CD14-positive monocyte (primary cell): ENCODE measurements at regions of chr16 and their contacts with region 1.

Region 1: DNA sequence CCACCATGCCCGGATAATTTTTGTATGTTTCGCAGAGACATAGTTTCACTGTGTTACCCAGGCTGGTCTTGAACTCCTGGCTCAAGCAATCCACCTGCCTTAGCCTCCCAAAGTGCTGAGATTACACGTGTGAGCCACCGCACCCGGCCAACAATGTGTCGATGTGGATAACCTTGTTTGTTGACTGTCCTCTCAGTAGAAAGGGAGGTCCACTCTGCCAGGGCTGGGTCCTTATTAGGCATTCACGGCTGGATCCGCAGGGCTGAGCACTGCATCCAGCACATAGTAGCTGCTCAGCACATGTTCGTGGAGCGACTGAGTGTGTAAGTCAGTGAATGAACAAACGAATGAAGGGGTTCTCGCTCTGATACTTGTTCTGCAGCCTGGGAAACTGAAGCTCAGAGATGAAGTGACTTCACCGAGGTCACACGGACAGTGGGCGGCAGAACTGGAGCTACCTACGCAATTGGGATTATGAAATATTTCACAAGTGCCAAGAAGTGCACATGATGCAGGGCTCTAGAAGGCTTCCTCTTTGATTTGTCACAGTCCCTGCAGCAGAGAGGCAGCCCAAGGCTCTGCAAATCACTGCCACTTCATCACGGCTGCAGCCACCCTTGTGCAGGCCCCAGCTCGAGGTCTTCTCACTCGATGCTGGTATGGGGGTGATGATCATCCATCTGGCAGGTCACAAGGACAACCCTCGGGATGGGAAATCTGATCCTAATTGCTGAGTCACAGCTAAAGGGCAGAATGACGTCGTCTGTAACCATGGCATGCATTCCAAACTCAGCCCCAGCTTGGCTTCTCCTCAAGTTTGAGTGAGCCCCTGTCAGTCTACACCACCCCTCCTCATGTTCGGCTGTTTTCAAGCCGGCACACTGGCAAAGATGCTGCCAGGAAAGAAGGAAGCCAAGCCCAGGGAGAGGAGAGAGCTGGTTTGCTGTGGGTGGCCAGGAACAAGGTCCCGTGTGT is 28.0 kb upstream of the SNN start:
- DNase-seq: peak; percentile 99
- H3K4me3 ChIP-seq: peak overlapping the region in 1 of 3 experiments; percentile 6
- H3K4me3 Mint-ChIP-seq: peak overlapping the region; percentile 56 to 71
- H3K27ac ChIP-seq: peak overlapping the region; percentile 96 to 97
- H3K27ac Mint-ChIP-seq: peak overlapping the region; percentile 99 to 100 (median 100)
- H3K4me1 ChIP-seq: peaks cover 26 to 30% of the 10 kb centered on the region in 2 donors
- H3K4me1 Mint-ChIP-seq: peaks cover 41% of the 10 kb centered on the region
- H3K27me3 ChIP-seq: no peaks in the 10 kb centered on the region
- H3K27me3 Mint-ChIP-seq: peaks cover 6 to 14% (median 14%) of the 10 kb centered on the region in 3 donors
- CTCF ChIP-seq: no peak

Region 2: GRCh38 chr16:11407047-11407982 is 232.9 kb before region 1 on chr16:
- intact Hi-C with region 1: loop called (anchors 5 kb)
- DNase-seq: peak; percentile 63 to 72 (median 65)
- H3K4me3 ChIP-seq: no peak overlapping the region
- H3K4me3 Mint-ChIP-seq: no peak overlapping the region
- H3K27ac ChIP-seq: no peak overlapping the region
- H3K27ac Mint-ChIP-seq: peak overlapping the region in 1 of 7 donors; percentile 18
- H3K4me1 ChIP-seq: peaks cover 17 to 23% of the 10 kb centered on the region in 2 donors
- H3K4me1 Mint-ChIP-seq: peaks cover 19% of the 10 kb centered on the region
- H3K27me3 ChIP-seq: no peaks in the 10 kb centered on the region
- H3K27me3 Mint-ChIP-seq: peaks cover 1 to 7% (median 5%) of the 10 kb centered on the region in 3 donors
- CTCF ChIP-seq: peak; percentile 85

Region 3: DNA sequence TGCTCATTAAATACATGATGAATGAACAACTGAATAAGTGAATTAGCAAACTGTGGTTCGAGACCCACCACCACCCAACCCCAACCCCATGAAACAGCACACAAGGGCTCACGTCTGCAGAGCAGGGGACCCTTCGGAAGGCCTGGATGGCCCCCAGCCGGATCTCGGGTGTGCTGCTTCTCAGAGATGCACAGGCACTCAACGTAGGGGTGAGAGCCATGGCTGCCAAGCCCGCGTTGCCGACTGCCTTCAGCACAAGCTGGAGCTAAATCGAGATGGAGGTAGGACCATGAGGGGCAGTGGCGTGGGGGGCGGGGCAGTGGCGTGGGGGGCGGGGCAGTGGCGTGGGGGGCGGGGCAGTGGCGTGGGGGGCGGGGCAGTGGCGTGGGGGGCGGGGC is 146.7 kb before region 1 on chr16:
- intact Hi-C with region 1: no loop called
- DNase-seq: no peak
- H3K4me3 ChIP-seq: no peak overlapping the region
- H3K4me3 Mint-ChIP-seq: no peak overlapping the region
- H3K27ac ChIP-seq: no peak overlapping the region
- H3K27ac Mint-ChIP-seq: no peak overlapping the region
- H3K4me1 ChIP-seq: peaks cover 29 to 36% of the 10 kb centered on the region in 2 donors
- H3K4me1 Mint-ChIP-seq: peaks cover 36% of the 10 kb centered on the region
- H3K27me3 ChIP-seq: no peaks in the 10 kb centered on the region
- H3K27me3 Mint-ChIP-seq: peaks cover 2 to 3% (median 2%) of the 10 kb centered on the region in 3 donors
- CTCF ChIP-seq: no peak

Region 4: DNA sequence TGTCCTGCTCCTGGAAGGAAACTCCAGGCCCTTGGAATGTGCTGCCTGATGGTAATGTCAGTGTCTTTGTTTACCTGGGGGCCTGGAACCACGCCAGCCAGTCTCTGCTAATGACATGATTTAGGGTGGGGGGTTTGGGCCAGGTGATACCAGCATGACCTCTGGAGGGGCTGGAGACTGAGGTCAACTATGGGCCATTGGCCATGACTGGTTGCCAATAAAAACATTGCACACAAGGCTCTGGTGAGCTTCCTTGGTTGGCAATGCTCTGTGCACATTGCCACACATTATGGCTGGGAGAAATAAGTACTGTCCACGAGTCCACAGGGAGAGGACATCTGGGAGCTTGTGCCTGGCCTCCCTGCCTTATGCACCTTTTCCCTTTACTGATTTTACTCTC is 106.0 kb before region 1 on chr16:
- intact Hi-C with region 1: loop called (anchors 5 kb)
- DNase-seq: no peak
- H3K4me3 ChIP-seq: no peak overlapping the region
- H3K4me3 Mint-ChIP-seq: no peak overlapping the region
- H3K27ac ChIP-seq: no peak overlapping the region
- H3K27ac Mint-ChIP-seq: peak overlapping the region in 1 of 7 donors; percentile 71
- H3K4me1 ChIP-seq: peaks cover 15 to 22% of the 10 kb centered on the region in 2 donors
- H3K4me1 Mint-ChIP-seq: peaks cover 27% of the 10 kb centered on the region
- H3K27me3 ChIP-seq: no peaks in the 10 kb centered on the region
- H3K27me3 Mint-ChIP-seq: peaks cover 5 to 10% (median 6%) of the 10 kb centered on the region in 3 donors
- CTCF ChIP-seq: no peak

Region 5: DNA sequence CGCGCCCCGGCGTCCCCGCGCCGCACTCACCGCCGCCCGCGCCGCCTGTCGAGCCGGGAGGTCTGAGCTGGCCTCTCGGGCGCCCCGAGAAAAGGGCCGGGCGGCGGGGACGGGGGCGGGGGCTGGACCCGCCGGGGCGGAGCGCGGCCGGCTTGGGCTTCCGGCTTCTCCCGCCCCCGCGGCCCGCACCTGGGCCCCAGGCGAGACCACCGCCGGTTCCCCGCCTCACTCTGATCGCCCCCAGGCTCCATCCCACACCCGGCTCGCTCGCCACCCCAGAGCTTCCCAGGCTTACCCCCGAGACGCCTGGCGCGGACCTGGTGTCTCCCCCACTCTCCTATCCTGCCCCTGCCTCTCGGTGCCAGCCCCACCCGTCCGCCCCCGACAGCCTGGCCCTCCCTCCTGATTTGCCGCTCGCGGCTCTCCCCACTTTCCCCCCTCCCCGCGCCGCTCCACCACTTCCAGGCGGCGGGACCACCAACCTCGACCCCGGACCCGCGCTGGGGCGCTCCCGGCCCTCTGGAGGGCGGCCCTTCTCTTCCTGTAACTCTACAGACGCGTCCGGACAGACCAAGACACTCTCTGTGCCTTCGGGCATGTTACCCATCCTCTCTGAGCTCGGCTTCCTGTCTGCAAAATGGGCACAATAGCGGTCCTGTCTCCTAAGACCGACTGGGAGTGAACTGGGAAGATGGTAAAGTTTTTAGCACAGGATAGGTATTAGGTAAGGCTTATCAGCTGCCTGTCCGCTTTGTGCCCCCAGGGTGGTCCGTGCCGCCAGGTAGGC is 53.2 kb before region 1 on chr16 and contains the start of gene LITAF:
- intact Hi-C with region 1: loop called in 1 of 2 experiments (anchors 2 kb)
- DNase-seq: peak in 2 of 3 donors; percentile 47 to 54
- H3K4me3 ChIP-seq: peak within 1 kb of the TSS; percentile 59 to 86 (median 66)
- H3K4me3 Mint-ChIP-seq: peak within 1 kb of the TSS; percentile 96 to 99
- H3K27ac ChIP-seq: peak within 1 kb of the TSS; percentile 83 to 93
- H3K27ac Mint-ChIP-seq: peak within 1 kb of the TSS; percentile 95 to 100 (median 98)
- H3K4me1 ChIP-seq: peaks cover 47 to 48% of the 10 kb centered on the region in 2 donors
- H3K4me1 Mint-ChIP-seq: peaks cover 45% of the 10 kb centered on the region
- H3K27me3 ChIP-seq: no peaks in the 10 kb centered on the region
- H3K27me3 Mint-ChIP-seq: peaks cover 1 to 43% (median 22%) of the 10 kb centered on the region in 3 donors
- CTCF ChIP-seq: no peak
- polyA plus RNA-seq, gene LITAF: 67.9 to 118 (median 69.0) TPM

Region 6: DNA sequence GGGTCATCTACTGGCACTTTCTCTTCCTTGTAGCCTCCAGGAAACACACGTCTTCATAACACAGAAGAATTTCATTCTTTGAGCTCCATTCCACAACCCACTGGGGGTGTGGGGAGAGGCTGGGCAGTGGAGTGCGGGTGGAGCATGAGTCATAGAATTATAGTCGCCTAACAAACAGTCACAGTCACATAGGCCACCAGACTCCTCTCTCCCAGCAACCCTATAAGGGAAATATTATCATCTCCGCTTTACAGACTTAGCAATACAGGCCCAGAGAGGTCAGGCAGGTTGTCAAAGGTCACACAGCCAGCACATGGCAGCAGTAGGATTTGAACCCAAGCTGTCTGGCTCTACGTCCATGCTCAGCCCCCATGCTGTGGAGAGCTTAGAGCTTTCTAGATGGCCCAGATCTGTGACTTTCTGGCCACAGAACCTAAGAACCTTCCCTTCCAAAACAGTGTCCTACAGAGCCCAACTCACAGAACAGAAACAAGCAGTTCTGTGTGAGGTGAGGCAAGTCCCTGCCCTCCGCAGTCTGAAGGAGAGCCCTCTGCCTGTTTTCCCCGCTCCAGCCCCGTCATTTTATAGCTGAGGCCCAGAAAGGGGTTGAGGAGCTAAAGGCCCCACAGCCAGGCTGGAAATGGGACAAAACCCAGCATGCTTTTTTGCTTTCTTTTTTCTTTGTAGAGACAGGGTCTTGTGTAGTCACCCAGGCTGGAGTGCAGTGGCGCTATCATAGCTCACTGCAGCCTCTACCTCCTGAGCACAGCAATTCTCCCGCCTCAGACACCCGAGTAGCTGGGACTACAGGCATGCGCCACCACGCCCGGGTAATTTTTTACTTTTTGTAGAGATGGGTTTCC is 42.7 kb before region 1 on chr16:
- intact Hi-C with region 1: loop called (anchors 1 to 5 kb)
- DNase-seq: peak; percentile 92 to 96 (median 94)
- H3K4me3 ChIP-seq: peak overlapping the region in 1 of 3 experiments; percentile 2
- H3K4me3 Mint-ChIP-seq: peak overlapping the region; percentile 53 to 66
- H3K27ac ChIP-seq: peak overlapping the region; percentile 89 to 93
- H3K27ac Mint-ChIP-seq: peak overlapping the region; percentile 97 to 100 (median 99)
- H3K4me1 ChIP-seq: peaks cover 42 to 47% of the 10 kb centered on the region in 2 donors
- H3K4me1 Mint-ChIP-seq: peaks cover 41% of the 10 kb centered on the region
- H3K27me3 ChIP-seq: no peaks in the 10 kb centered on the region
- H3K27me3 Mint-ChIP-seq: peaks cover 0 to 11% (median 6%) of the 10 kb centered on the region in 3 donors
- CTCF ChIP-seq: no peak

Region 7: DNA sequence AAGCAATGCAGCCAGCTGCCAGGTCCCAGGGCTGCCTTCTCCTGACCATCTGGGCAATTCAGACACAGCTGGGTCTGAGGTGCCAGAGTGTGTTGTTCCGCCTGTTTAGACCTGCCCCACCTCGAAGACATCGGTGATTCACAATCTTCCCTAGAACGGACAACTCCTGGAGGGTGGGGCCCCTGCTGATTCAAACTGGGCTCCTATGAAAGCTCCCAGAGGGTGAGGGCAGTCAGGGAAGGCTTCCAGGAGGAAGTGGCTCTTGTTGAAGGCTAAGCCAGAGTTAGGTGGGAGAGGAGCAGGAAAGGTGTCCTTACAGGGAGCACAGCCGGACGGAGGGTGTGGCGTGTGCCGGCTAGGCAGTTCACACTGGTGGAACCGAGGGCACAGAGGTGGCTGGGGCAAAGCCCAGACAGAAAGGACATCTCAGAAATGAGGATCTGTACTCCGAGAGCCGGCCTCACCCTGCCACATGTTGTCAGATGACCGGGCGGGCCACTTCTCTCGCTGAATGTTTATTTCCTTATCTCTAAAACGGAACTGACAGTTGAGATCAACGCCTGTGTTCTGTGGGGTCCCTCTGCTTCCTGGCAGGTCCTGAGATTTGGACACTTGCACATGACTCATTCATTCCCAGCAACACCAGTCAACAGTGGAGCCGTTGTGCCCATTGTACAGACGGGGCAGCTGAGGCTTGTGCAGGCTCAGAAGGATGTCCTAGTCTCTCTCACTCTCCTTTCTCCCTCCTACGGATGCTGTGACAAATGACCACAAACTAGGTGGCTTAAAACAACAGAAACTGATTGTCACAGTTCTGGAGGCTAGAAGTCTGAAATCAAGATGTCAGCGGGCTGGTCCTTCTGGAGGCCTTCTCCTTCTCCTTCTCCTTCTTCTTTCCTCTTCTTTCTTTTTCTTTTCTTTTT is 26.6 kb before region 1 on chr16:
- intact Hi-C with region 1: loop called (anchors 1 to 2 kb)
- DNase-seq: peak; percentile 85 to 95 (median 93)
- H3K4me3 ChIP-seq: peak overlapping the region in 1 of 3 experiments; percentile 52
- H3K4me3 Mint-ChIP-seq: peak overlapping the region; percentile 70 to 77
- H3K27ac ChIP-seq: peak overlapping the region; percentile 97 to 98
- H3K27ac Mint-ChIP-seq: peak overlapping the region; percentile 92 to 100 (median 99)
- H3K4me1 ChIP-seq: peaks cover 67 to 68% of the 10 kb centered on the region in 2 donors
- H3K4me1 Mint-ChIP-seq: peaks cover 75% of the 10 kb centered on the region
- H3K27me3 ChIP-seq: no peaks in the 10 kb centered on the region
- H3K27me3 Mint-ChIP-seq: peaks cover 1 to 24% (median 3%) of the 10 kb centered on the region in 3 donors
- CTCF ChIP-seq: no peak